ENCODE measurements at regions of chr1 and their contacts with region 1.

Region 1: DNA sequence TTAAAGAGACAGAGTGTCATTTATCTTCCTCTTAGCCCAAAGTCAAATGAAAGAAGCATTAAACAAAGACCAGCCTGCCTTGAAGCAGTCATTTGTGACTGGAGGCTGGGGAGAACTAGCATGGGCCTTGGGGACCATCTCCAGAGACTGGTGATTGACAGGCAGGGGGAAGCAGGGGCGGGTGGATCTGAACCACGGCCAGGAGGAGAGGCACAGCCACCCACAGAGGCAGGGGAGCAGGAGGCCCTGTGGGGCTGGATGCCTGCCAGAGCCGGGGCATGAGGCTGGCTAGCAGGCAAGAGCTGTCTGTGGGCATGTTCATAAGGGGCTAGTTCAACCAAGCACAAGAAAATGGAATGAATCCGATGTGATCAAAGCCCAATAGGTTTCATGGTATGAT is 73.9 kb downstream of the PLXNA2 start:
- DNase-seq: no peak
- H3K4me3 ChIP-seq: no peak overlapping the region
- H3K27ac ChIP-seq: no peak overlapping the region
- H3K4me1 ChIP-seq: peaks cover 0 to 5% of the 10 kb centered on the region in 2 donors
- H3K27me3 ChIP-seq: no peaks in the 10 kb centered on the region
- CTCF ChIP-seq: no peak
- POLR2A ChIP-seq: no peak

Region 2: GRCh38 chr1:207935166-207935583 is 235.1 kb before region 1 on chr1:
- intact Hi-C with region 1: loop called (anchors 5 kb)
- DNase-seq: no peak
- H3K4me3 ChIP-seq: no peak overlapping the region
- H3K27ac ChIP-seq: no peak overlapping the region
- H3K4me1 ChIP-seq: no peaks in the 10 kb centered on the region
- H3K27me3 ChIP-seq: no peaks in the 10 kb centered on the region
- CTCF ChIP-seq: no peak
- POLR2A ChIP-seq: no peak

Region 3: DNA sequence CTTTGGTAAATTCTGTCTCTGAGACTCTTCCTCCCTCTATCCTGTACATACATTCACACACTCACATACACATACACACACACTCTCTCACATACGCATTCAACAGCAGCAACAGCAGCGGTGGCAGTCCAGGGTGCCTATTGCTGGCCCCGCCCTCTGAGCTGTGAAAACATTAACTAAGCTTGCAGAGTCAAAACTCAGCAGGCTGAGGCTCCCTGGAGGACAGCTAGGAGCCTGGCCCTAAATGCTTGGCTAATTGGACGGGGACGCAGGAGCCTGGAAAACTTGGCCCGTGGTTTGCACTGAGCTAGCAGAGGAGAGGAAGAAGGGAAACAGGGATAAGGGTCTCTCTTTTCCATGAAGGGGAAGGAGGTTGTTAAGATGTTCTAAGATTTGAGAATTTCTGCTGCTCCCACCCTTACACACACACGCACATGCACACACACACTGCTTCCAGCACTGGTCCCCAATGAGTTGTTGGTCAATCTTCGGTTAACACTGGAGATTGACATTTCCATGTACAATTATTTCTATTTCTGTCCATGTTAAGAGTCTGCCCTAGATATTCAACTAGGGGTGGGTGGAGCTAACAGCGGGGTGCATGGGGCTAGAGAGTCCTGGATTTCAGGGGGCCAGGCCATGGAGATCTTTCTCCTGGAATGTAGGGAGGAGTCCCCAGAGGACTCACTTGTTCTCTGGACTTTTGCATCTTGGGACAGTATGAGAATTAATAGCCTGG is 20.3 kb before region 1 on chr1:
- intact Hi-C with region 1: no loop called
- DNase-seq: no peak
- H3K4me3 ChIP-seq: no peak overlapping the region
- H3K27ac ChIP-seq: no peak overlapping the region
- H3K4me1 ChIP-seq: no peaks in the 10 kb centered on the region
- H3K27me3 ChIP-seq: no peaks in the 10 kb centered on the region
- CTCF ChIP-seq: no peak
- POLR2A ChIP-seq: no peak